WTC11 (cell line): ENCODE measurements at regions of chr19 and their contacts with region 1.

Region 1: GRCh38 chr19:43624933-43625332 is 5.5 kb upstream of the ZNF428 start:
- DNase-seq: peak; percentile 98
- ATAC-seq: peak; percentile 82
- H3K4me3 Mint-ChIP-seq: peak overlapping the region; percentile 47
- H3K27ac Mint-ChIP-seq: peak overlapping the region; percentile 97
- H3K4me1 Mint-ChIP-seq: peaks cover 26% of the 10 kb centered on the region
- H3K27me3 Mint-ChIP-seq: peaks cover 34% of the 10 kb centered on the region
- CTCF ChIP-seq: no peak

Region 2: GRCh38 chr19:43584484-43584883 is 40.4 kb before region 1 on chr19:
- CTCF ChIA-PET with region 1: no interaction called
- POLR2A ChIA-PET with region 1: no interaction called
- DNase-seq: no peak
- ATAC-seq: no peak
- H3K4me3 Mint-ChIP-seq: no peak overlapping the region
- H3K27ac Mint-ChIP-seq: peak overlapping the region; percentile 66; the same call in 1 of the 2 replicates
- H3K4me1 Mint-ChIP-seq: peaks cover 20% of the 10 kb centered on the region
- H3K27me3 Mint-ChIP-seq: no peaks in the 10 kb centered on the region; the same call in 1 of the 2 replicates
- CTCF ChIP-seq: no peak

Region 3: GRCh38 chr19:43662487-43662886 is 37.6 kb after region 1 on chr19:
- CTCF ChIA-PET with region 1: interaction called, 12 read pairs
- POLR2A ChIA-PET with region 1: no interaction called
- DNase-seq: no peak
- ATAC-seq: peak; percentile 79
- H3K4me3 Mint-ChIP-seq: no peak overlapping the region
- H3K27ac Mint-ChIP-seq: no peak overlapping the region; the same call in 1 of the 2 replicates
- H3K4me1 Mint-ChIP-seq: peaks cover 6% of the 10 kb centered on the region
- H3K27me3 Mint-ChIP-seq: peaks cover 8% of the 10 kb centered on the region
- CTCF ChIP-seq: peak; percentile 19; the same call in 1 of the 2 replicates